ENCODE measurements at regions of chr20 and their contacts with region 1.

Region 1: DNA sequence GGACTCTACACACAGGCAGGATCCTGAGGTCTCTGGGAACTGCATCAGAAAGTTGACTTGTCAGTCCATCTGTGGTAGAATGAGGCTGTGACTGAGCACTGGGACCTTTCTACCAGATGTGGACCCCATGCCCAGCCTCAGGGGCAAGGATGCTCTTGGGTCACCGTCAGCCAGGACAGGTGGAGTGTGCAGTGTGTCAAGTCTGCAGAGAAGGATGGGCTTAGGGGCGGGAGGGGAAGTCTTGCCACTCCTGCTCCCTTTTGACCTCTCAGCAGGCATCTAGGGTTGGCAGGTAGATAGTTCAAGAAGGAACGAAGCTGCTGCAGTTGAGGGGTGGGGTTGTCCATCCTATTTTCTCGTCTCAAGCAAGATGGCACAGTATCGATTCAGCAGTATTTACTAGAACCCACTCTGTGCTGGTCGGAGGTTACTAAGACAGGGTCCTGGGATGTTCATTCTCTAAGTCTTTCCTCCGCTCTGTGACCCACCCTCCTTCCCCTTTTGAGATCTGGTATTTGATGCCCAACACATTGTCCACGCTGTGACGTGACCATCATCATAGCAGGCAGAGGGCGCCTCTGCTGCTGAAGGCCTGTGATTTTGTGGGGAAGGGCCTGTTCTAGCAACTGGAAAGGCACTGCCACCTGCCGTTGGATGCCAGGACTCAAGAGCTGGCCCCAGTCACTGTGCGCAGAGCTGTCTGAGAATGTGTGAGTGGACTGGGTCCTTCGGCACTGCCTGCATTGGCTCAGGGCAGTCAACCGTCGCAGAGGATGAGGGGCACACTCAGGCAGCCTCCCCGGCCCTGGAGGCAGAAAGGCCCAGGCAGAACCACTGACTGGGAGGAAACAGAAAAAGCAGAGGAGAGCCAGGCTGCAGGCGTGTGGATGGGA is 23.2 kb downstream of the RBCK1 start:
- DNase-seq: peak; percentile 93
- ATAC-seq: peak; percentile 84
- H3K4me3 ChIP-seq: no peak overlapping the region
- H3K27ac ChIP-seq: no peak overlapping the region
- H3K4me1 ChIP-seq: 0 out of 2 replicates have a peak, but pooled peaks cover 7% of the 10 kb centered on the region
- H3K27me3 ChIP-seq: no peaks in the 10 kb centered on the region
- CTCF ChIP-seq: peak; percentile 99
- EP300 ChIP-seq: no peak; a peak in 1 of 4 replicates
- POLR2A ChIP-seq: peak in 1 of 2 experiments; percentile 62; a peak in 3 of 4 replicates
- RAD21 ChIP-seq: peak; percentile 100

Region 2: GRCh38 chr20:381581-382290 is 49.5 kb before region 1 on chr20:
- CTCF ChIA-PET with region 1: interaction called, 3 read pairs
- POLR2A ChIA-PET with region 1: interaction called, 17 read pairs
- in situ Hi-C with region 1: no loop called
- intact Hi-C with region 1: loop called (anchors 1 kb)
- DNase-seq: peak; percentile 85
- ATAC-seq: peak; percentile 69
- H3K4me3 ChIP-seq: peak overlapping the region; percentile 93 to 98 (median 97)
- H3K27ac ChIP-seq: peak overlapping the region; percentile 93
- H3K4me1 ChIP-seq: peaks cover 74% of the 10 kb centered on the region
- H3K27me3 ChIP-seq: no peaks in the 10 kb centered on the region; a peak in 1 of 5 replicates
- CTCF ChIP-seq: no peak; the same call in 1 of the 2 replicates
- EP300 ChIP-seq: 0 out of 4 replicates have a peak, but pooled peaks of 1 of the 2 experiments have one; percentile 37
- POLR2A ChIP-seq: peak; percentile 90
- RAD21 ChIP-seq: peak; percentile 72

Region 3: GRCh38 chr20:401682-402495 is 29.4 kb before region 1 on chr20:
- CTCF ChIA-PET with region 1: interaction called, 3 read pairs
- POLR2A ChIA-PET with region 1: interaction called, 18 read pairs
- in situ Hi-C with region 1: no loop called
- intact Hi-C with region 1: no loop called
- DNase-seq: peak; percentile 100
- ATAC-seq: peak; percentile 75
- H3K4me3 ChIP-seq: peak overlapping the region in 2 of 3 experiments; percentile 27 to 57; a peak in 2 of 6 replicates
- H3K27ac ChIP-seq: peak overlapping the region; percentile 99
- H3K4me1 ChIP-seq: peaks cover 97% of the 10 kb centered on the region
- H3K27me3 ChIP-seq: no peaks in the 10 kb centered on the region; a peak in 1 of 5 replicates
- CTCF ChIP-seq: no peak
- EP300 ChIP-seq: peak; percentile 97 to 99
- POLR2A ChIP-seq: peak; percentile 78 to 85
- RAD21 ChIP-seq: peak; percentile 36; the same call in 1 of the 2 replicates

Region 4: GRCh38 chr20:407133-407952 is 23.9 kb before region 1 on chr20:
- CTCF ChIA-PET with region 1: no interaction called
- POLR2A ChIA-PET with region 1: interaction called, 18 read pairs
- in situ Hi-C with region 1: no loop called
- intact Hi-C with region 1: loop called (anchors 1 kb)
- DNase-seq: peak; percentile 95
- ATAC-seq: peak; percentile 90
- H3K4me3 ChIP-seq: peak overlapping the region; percentile 49 to 79 (median 57)
- H3K27ac ChIP-seq: peak overlapping the region; percentile 96
- H3K4me1 ChIP-seq: peaks cover 81% of the 10 kb centered on the region
- H3K27me3 ChIP-seq: no peaks in the 10 kb centered on the region; a peak in 1 of 5 replicates
- CTCF ChIP-seq: peak; percentile 57
- EP300 ChIP-seq: peak; percentile 9 to 25; a peak in 1 of 4 replicates
- POLR2A ChIP-seq: peak; percentile 96 to 98
- RAD21 ChIP-seq: peak; percentile 87

Region 5: GRCh38 chr20:478949-479429 is 47.7 kb after region 1 on chr20:
- CTCF ChIA-PET with region 1: interaction called, 24 read pairs
- POLR2A ChIA-PET with region 1: no interaction called
- in situ Hi-C with region 1: no loop called
- intact Hi-C with region 1: loop called (anchors 1 kb)
- DNase-seq: peak; percentile 84
- ATAC-seq: peak; percentile 60
- H3K4me3 ChIP-seq: no peak overlapping the region
- H3K27ac ChIP-seq: no peak overlapping the region
- H3K4me1 ChIP-seq: peaks cover 56% of the 10 kb centered on the region
- H3K27me3 ChIP-seq: no peaks in the 10 kb centered on the region
- CTCF ChIP-seq: peak; percentile 81
- EP300 ChIP-seq: 0 out of 4 replicates have a peak, but pooled peaks of 1 of the 2 experiments have one; percentile 25
- POLR2A ChIP-seq: no peak
- RAD21 ChIP-seq: peak; percentile 82

Measured in HepG2 (cell line).